Colonic mucosa (tissue), 4 donors: ENCODE measurements at regions of chr5 and their contacts with region 1.

Region 1: DNA sequence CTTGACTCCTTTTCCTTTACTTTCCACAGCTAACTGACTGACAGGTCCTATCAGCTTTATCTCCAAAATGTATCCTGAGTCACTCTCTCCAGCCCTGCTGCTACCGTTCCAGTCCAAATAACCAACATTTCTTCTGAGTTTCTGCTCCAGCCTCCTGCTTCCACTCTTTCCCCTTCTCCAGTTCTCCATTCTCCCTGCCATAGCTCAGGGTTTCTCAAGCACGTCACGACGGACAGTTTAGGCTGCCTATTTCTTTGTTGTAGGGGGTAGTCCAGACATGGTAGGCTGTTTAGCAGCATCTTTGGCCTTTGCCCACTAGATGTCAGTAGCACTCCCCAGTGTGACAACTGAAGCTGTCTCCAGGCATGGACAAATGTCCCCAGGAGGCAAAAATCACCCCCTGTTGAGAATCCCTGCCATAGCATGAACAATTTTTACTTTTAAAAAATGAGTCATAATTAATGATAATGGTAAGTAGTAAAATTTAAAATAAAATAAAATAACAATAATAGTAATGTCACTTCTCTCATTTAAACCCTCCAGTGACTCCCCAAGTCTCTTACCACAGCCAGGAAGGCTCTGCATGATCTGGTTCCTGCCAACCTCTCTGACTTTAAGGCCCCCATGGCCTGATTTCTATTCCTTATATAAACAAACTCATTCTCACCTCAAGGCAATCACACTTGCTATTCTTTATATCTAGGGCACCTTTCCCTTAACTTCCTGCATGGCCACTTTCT is 105.4 kb upstream of the FER start:
- DNase-seq: peak; percentile 66
- H3K4me3 ChIP-seq: no peak overlapping the region
- H3K27ac ChIP-seq: no peak overlapping the region
- H3K4me1 ChIP-seq: no peaks in the 10 kb centered on the region
- H3K27me3 ChIP-seq: no peaks in the 10 kb centered on the region
- CTCF ChIP-seq: peak; percentile 77

Region 2: DNA sequence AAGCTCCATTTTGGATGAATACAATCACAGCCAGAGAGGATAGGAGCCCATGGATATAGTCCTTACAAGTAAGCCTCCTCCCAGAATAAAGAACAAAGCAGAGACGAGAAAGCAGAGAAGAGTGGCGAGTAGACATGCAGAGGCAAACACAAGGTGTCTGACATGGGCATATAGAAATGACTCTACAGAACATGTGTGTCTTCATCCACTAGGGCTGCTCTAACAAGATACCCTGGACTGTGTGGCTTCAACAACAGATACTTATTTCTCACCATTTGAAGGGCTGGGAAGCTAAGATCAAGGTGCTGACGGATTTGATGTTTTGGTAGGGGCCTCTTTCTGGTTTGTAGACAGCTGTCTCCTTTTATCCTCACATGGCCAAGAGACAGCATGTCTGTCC is 73.1 kb after region 1 on chr5:
- intact Hi-C with region 1: no loop called
- DNase-seq: no peak
- H3K4me3 ChIP-seq: no peak overlapping the region
- H3K27ac ChIP-seq: no peak overlapping the region
- H3K4me1 ChIP-seq: no peaks in the 10 kb centered on the region
- H3K27me3 ChIP-seq: no peaks in the 10 kb centered on the region
- CTCF ChIP-seq: no peak

Region 3: GRCh38 chr5:109468737-109469420 is 826.5 kb after region 1 on chr5:
- intact Hi-C with region 1: loop called (anchors 5 kb)
- DNase-seq: peak; percentile 98
- H3K4me3 ChIP-seq: no peak overlapping the region
- H3K27ac ChIP-seq: no peak overlapping the region
- H3K4me1 ChIP-seq: no peaks in the 10 kb centered on the region
- H3K27me3 ChIP-seq: no peaks in the 10 kb centered on the region
- CTCF ChIP-seq: peak; percentile 66